ENCODE measurements at regions of chr1 and their contacts with region 1.

Region 1: DNA sequence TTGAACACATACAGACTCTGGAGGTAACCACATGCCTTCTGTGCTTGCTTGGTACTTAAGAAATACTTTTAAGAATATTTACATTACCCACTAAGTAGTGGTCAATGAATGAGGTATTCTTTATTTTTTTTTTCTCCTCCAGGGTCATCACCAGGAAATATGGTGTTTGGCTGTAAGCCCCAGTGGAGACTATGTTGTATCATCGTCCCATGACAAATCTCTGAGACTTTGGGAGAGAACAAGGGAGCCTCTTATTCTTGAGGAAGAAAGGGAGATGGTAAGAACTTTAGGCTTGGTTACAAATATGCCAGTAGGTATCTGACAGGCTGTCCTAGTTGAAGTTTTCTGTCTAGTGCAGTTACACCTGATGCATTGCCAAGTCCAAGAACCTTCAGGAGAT is 22.8 kb downstream of the WDR3 start:
- DNase-seq: no peak
- H3K4me3 Mint-ChIP-seq: no peak overlapping the region
- H3K27ac Mint-ChIP-seq: no peak overlapping the region
- H3K4me1 Mint-ChIP-seq: no peaks in the 10 kb centered on the region
- H3K27me3 Mint-ChIP-seq: no peaks in the 10 kb centered on the region

Region 2: GRCh38 chr1:117942293-117942692 is 10.1 kb before region 1 on chr1:
- CTCF ChIA-PET with region 1: interaction called, 3 read pairs
- intact Hi-C with region 1: loop called (anchors 2 kb)
- DNase-seq: no peak
- H3K4me3 Mint-ChIP-seq: no peak overlapping the region
- H3K27ac Mint-ChIP-seq: no peak overlapping the region
- H3K4me1 Mint-ChIP-seq: no peaks in the 10 kb centered on the region
- H3K27me3 Mint-ChIP-seq: no peaks in the 10 kb centered on the region

Measured in activated naive CD4-positive, alpha-beta T cell treated with anti-CD3 and anti-CD28 coated beads for 36 hours (primary cell).